HEK293T (cell line): ENCODE measurements at regions of chr10 and their contacts with region 1.

Region 1: DNA sequence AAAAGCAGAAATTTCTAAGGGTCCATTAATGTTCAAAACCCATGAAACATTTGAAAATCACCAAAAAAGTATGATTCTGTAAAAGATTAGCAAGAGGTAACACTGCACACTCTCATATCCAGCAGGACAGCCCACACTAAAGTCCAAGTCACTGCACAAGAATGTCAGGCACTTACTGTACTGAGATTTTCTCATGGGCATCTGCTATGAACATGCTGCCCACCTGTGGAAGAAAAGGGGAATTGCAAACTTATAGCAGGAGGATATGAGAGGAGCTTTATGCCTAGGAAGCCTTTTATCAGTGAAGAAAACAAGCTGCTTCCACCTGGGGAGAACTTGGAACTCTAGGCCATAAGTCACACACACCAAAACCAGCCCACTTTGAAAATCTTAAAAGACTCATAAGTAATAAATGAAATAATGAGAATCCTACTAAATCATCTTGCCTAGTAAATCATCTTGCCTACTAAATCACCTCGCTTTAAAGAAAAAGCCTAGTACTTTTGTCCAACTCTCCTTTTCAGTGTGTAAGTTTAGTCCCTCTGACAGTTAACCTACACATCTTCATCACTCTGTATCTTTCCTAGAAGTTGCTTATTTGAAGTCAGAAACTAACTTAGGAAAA is 46.1 kb downstream of the ARMH3 start:
- DNase-seq: peak; percentile 83

Region 2: GRCh38 chr10:101840741-101841453 is 169.0 kb before region 1 on chr10:
- CTCF ChIA-PET with region 1: interaction called, 71 read pairs
- POLR2A ChIA-PET with region 1: interaction called, 7 read pairs
- DNase-seq: peak; percentile 95

Region 3: GRCh38 chr10:101889256-101890210 is 120.4 kb before region 1 on chr10:
- CTCF ChIA-PET with region 1: interaction called, 42 read pairs
- POLR2A ChIA-PET with region 1: no interaction called
- DNase-seq: peak; percentile 81

Region 4: GRCh38 chr10:101986625-101986973 is 23.3 kb before region 1 on chr10:
- CTCF ChIA-PET with region 1: no interaction called
- POLR2A ChIA-PET with region 1: no interaction called
- DNase-seq: no peak

Region 5: GRCh38 chr10:101997803-101998202 is 12.1 kb before region 1 on chr10:
- CTCF ChIA-PET with region 1: interaction called, 10 read pairs
- POLR2A ChIA-PET with region 1: no interaction called
- DNase-seq: no peak

Region 6: GRCh38 chr10:102020938-102021337 is 11.0 kb after region 1 on chr10:
- CTCF ChIA-PET with region 1: interaction called, 11 read pairs
- POLR2A ChIA-PET with region 1: no interaction called
- DNase-seq: no peak

Region 7: GRCh38 chr10:102106998-102107397 is 97.1 kb after region 1 on chr10:
- CTCF ChIA-PET with region 1: no interaction called
- POLR2A ChIA-PET with region 1: no interaction called
- DNase-seq: no peak